GM12878 (cell line): ENCODE measurements at regions of chr1 and their contacts with region 1.

Region 1: GRCh38 chr1:213864091-213864490 is 123.7 kb upstream of the PROX1 start:
- DNase-seq: no peak
- ATAC-seq: no peak
- H3K4me3 ChIP-seq: no peak overlapping the region
- H3K27ac ChIP-seq: no peak overlapping the region
- H3K4me1 ChIP-seq: no peaks in the 10 kb centered on the region
- H3K27me3 ChIP-seq: peaks cover 0 to 3% of the 10 kb centered on the region in 2 experiments; a peak in 1 of 4 replicates
- CTCF ChIP-seq: no peak
- EP300 ChIP-seq: no peak
- POLR2A ChIP-seq: no peak
- RAD21 ChIP-seq: no peak

Region 2: GRCh38 chr1:213357403-213357802 is 506.7 kb before region 1 on chr1:
- CTCF ChIA-PET with region 1: no interaction called
- POLR2A ChIA-PET with region 1: no interaction called
- RAD21 ChIA-PET with region 1: no interaction called
- SMC1A ChIA-PET with region 1: no interaction called
- in situ Hi-C with region 1: no loop called
- intact Hi-C with region 1: no loop called
- DNase-seq: no peak
- ATAC-seq: no peak
- H3K4me3 ChIP-seq: no peak overlapping the region
- H3K27ac ChIP-seq: no peak overlapping the region
- H3K4me1 ChIP-seq: no peaks in the 10 kb centered on the region
- H3K27me3 ChIP-seq: no peaks in the 10 kb centered on the region; a peak in 1 of 4 replicates
- CTCF ChIP-seq: no peak
- EP300 ChIP-seq: no peak
- POLR2A ChIP-seq: no peak
- RAD21 ChIP-seq: no peak

Region 3: GRCh38 chr1:213374369-213374768 is 489.7 kb before region 1 on chr1:
- CTCF ChIA-PET with region 1: no interaction called
- POLR2A ChIA-PET with region 1: no interaction called
- RAD21 ChIA-PET with region 1: no interaction called
- SMC1A ChIA-PET with region 1: no interaction called
- in situ Hi-C with region 1: no loop called
- intact Hi-C with region 1: loop called (anchors 10 kb)
- DNase-seq: no peak
- ATAC-seq: peak; percentile 96
- H3K4me3 ChIP-seq: no peak overlapping the region
- H3K27ac ChIP-seq: no peak overlapping the region
- H3K4me1 ChIP-seq: no peaks in the 10 kb centered on the region
- H3K27me3 ChIP-seq: no peaks in the 10 kb centered on the region
- CTCF ChIP-seq: peak; percentile 84 to 86 (median 84)
- EP300 ChIP-seq: no peak
- POLR2A ChIP-seq: no peak
- RAD21 ChIP-seq: peak; percentile 86

Region 4: DNA sequence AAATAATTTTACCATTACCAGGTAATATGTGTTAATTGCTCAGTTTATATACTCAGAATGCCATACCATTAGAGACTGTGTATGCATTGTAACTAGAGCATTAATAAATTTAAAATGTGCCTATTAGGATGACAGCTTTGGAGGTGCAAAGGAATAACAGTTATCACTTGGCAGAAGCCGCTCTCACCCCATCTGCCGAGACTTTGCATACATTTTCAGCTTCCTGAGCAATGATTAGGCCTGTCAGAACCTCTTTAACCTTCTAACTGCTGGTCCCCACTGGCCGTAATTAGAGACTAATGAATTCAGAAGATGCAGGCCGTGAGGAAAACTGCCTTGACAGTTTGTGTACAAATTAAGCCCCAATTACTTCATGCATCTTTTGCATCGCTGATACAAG is 34.3 kb before region 1 on chr1:
- CTCF ChIA-PET with region 1: no interaction called
- POLR2A ChIA-PET with region 1: no interaction called
- RAD21 ChIA-PET with region 1: no interaction called
- SMC1A ChIA-PET with region 1: no interaction called
- in situ Hi-C with region 1: no loop called
- intact Hi-C with region 1: no loop called
- DNase-seq: no peak
- ATAC-seq: no peak
- H3K4me3 ChIP-seq: no peak overlapping the region
- H3K27ac ChIP-seq: no peak overlapping the region
- H3K4me1 ChIP-seq: no peaks in the 10 kb centered on the region
- H3K27me3 ChIP-seq: peaks cover 0 to 3% of the 10 kb centered on the region in 2 experiments; a peak in 2 of 4 replicates
- CTCF ChIP-seq: no peak
- EP300 ChIP-seq: no peak
- POLR2A ChIP-seq: no peak
- RAD21 ChIP-seq: no peak